Tibial artery (tissue), 4 donors: ENCODE measurements at regions of chr1 and their contacts with region 1.

Region 1: DNA sequence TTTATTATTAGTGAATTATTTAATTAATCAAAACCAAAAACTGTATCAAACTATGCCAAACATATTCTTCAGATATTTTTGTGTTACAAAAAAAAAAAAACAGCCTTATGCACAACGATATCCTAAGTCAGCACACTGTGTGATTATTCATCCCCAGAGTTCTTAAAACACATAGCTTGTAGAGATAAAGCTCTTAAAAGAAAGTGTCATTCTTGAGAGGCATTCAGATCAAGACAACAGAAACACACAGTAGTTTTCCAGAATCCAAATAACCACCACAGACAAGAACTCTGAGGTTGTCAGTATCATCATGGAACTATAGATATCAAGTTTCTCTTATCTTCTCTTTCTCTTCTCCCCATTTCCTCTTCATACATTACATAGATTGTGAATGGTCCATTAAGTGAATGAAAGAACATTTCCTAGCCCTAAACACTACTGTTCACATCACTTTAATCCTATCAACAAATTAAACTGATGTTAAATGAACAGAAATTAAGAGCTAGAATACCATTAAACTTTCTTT is 13.5 kb downstream of the ZZZ3 start:
- DNase-seq: no peak
- H3K4me3 ChIP-seq: no peak overlapping the region
- H3K27ac ChIP-seq: no peak overlapping the region
- H3K4me1 ChIP-seq: peaks cover 0 to 64% (median 20%) of the 10 kb centered on the region in 4 donors
- H3K27me3 ChIP-seq: no peaks in the 10 kb centered on the region
- CTCF ChIP-seq: no peak

Region 2: GRCh38 chr1:77350012-77350770 is 318.8 kb before region 1 on chr1:
- intact Hi-C with region 1: loop called (anchors 5 kb)
- DNase-seq: no peak
- H3K4me3 ChIP-seq: no peak overlapping the region
- H3K27ac ChIP-seq: no peak overlapping the region
- H3K4me1 ChIP-seq: no peaks in the 10 kb centered on the region
- H3K27me3 ChIP-seq: no peaks in the 10 kb centered on the region
- CTCF ChIP-seq: no peak